CD4-positive, alpha-beta memory T cell (primary cell): ENCODE measurements at regions of chr1 and their contacts with region 1.

Region 1: GRCh38 chr1:247078261-247079140 is at the start of gene ZNF670:
- DNase-seq: peak; percentile 70 to 86 (median 72)
- H3K4me3 ChIP-seq: peak within 1 kb of the TSS; percentile 67 to 73
- H3K4me3 Mint-ChIP-seq: peak within 1 kb of the TSS; percentile 89 to 94 (median 92)
- H3K27ac ChIP-seq: peak within 1 kb of the TSS; percentile 64
- H3K27ac Mint-ChIP-seq: peak within 1 kb of the TSS; percentile 75 to 91 (median 87)
- H3K4me1 ChIP-seq: peaks cover 16% of the 10 kb centered on the region
- H3K4me1 Mint-ChIP-seq: peaks cover 16 to 38% (median 23%) of the 10 kb centered on the region in 4 donors
- H3K27me3 ChIP-seq: no peaks in the 10 kb centered on the region
- H3K27me3 Mint-ChIP-seq: peaks cover 3 to 4% of the 10 kb centered on the region in 2 donors
- total RNA-seq, gene ZNF670: 2.9 to 3.3 TPM

Region 2: GRCh38 chr1:246907472-246907871 is 171.0 kb before region 1 on chr1:
- CTCF ChIA-PET with region 1: no interaction called
- POLR2A ChIA-PET with region 1: no interaction called
- intact Hi-C with region 1: loop called (anchors 10 kb)
- DNase-seq: peak in 4 of 5 donors; percentile 15 to 28 (median 22)
- H3K4me3 ChIP-seq: no peak overlapping the region
- H3K4me3 Mint-ChIP-seq: no peak overlapping the region
- H3K27ac ChIP-seq: no peak overlapping the region
- H3K27ac Mint-ChIP-seq: peak overlapping the region in 2 of 7 donors; percentile 46 to 85
- H3K4me1 ChIP-seq: no peaks in the 10 kb centered on the region
- H3K4me1 Mint-ChIP-seq: peaks cover 0 to 14% (median 4%) of the 10 kb centered on the region in 4 donors
- H3K27me3 ChIP-seq: no peaks in the 10 kb centered on the region
- H3K27me3 Mint-ChIP-seq: no peaks in the 10 kb centered on the region

Region 3: DNA sequence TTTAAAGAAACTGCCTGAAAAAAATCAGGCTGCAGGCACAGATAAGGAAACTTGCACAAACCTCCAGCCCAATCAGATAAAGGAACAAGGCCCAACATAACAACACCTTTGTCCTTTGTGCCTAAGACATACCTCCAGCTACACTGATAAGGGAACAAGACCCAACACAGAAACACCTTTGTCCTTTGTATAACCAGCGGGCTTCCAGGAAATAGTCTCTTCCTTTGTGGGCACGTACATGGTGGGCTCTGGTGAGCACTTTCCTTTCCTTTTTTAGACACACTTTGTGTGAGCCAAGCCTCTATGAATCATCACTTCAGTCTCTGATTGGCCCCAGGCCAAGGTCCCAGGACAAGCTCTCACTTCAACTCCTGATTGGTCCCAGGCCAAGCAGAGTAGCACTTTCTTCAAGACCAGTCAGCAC is 23.5 kb before region 1 on chr1:
- CTCF ChIA-PET with region 1: no interaction called
- POLR2A ChIA-PET with region 1: no interaction called
- intact Hi-C with region 1: no loop called
- DNase-seq: no peak
- H3K4me3 ChIP-seq: no peak overlapping the region
- H3K4me3 Mint-ChIP-seq: no peak overlapping the region
- H3K27ac ChIP-seq: no peak overlapping the region
- H3K27ac Mint-ChIP-seq: no peak overlapping the region
- H3K4me1 ChIP-seq: no peaks in the 10 kb centered on the region
- H3K4me1 Mint-ChIP-seq: peaks cover 1 to 12% (median 4%) of the 10 kb centered on the region in 4 donors
- H3K27me3 ChIP-seq: no peaks in the 10 kb centered on the region
- H3K27me3 Mint-ChIP-seq: no peaks in the 10 kb centered on the region

Region 4: DNA sequence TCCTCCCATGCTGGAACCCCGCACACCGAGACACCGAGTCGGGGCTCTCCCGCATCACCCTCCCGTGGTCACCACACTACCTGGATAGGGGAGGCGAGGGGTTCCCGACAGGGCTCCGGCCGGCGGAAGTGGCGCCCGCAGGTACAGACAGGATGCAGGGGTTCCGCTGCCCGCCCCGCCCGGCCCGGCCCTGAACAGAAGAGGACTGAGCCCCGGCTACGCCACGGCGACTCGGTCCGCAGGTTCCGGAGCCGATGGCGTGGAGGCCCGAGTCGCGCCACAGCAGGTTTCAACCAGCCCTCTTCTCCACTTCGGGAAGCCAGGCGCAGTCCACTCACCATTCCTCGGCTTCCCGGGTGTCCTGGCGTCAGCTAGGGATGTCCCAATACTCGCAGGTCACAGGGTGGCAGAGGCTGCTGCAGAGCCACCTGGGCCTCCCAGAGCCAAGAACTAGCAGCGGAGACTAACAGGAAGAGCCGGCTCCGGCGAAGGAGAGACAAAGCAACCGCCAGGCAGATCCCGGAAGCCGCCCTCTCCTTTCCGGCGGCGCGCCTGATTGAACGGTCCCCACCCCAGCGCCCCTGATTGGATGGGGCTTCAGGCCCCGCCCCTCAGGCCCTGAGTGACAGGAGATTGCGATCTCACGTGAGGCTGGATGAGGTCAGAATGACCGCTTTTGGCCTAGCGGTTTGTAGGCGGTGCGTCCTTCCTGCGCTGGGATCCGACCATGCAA is 25.5 kb after region 1 on chr1 and contains the start of gene ZNF669:
- CTCF ChIA-PET with region 1: no interaction called
- POLR2A ChIA-PET with region 1: interaction called, 18 read pairs
- intact Hi-C with region 1: loop called (anchors 1 kb)
- DNase-seq: peak; percentile 87 to 92 (median 89)
- H3K4me3 ChIP-seq: peak within 1 kb of the TSS; percentile 59 to 87
- H3K4me3 Mint-ChIP-seq: peak within 1 kb of the TSS; percentile 88 to 93 (median 90)
- H3K27ac ChIP-seq: peak within 1 kb of the TSS; percentile 49
- H3K27ac Mint-ChIP-seq: peak within 1 kb of the TSS; percentile 75 to 90 (median 83)
- H3K4me1 ChIP-seq: peaks cover 13% of the 10 kb centered on the region
- H3K4me1 Mint-ChIP-seq: peaks cover 9 to 25% (median 17%) of the 10 kb centered on the region in 4 donors
- H3K27me3 ChIP-seq: no peaks in the 10 kb centered on the region
- H3K27me3 Mint-ChIP-seq: peaks cover 18 to 19% of the 10 kb centered on the region in 2 donors
- total RNA-seq, gene ZNF669: 12.0 to 14.7 TPM

Region 5: GRCh38 chr1:247210376-247211117 is 132.0 kb after region 1 on chr1:
- CTCF ChIA-PET with region 1: no interaction called
- POLR2A ChIA-PET with region 1: interaction called, 10 read pairs
- intact Hi-C with region 1: loop called (anchors 1 kb)
- DNase-seq: peak; percentile 91 to 93 (median 92)
- H3K4me3 ChIP-seq: peak overlapping the region; percentile 66 to 70
- H3K4me3 Mint-ChIP-seq: peak overlapping the region; percentile 94 to 97 (median 95)
- H3K27ac ChIP-seq: peak overlapping the region; percentile 76
- H3K27ac Mint-ChIP-seq: peak overlapping the region; percentile 95 to 97 (median 95)
- H3K4me1 ChIP-seq: peaks cover 70% of the 10 kb centered on the region
- H3K4me1 Mint-ChIP-seq: peaks cover 50 to 74% (median 64%) of the 10 kb centered on the region in 4 donors
- H3K27me3 ChIP-seq: no peaks in the 10 kb centered on the region
- H3K27me3 Mint-ChIP-seq: no peaks in the 10 kb centered on the region

Region 6: DNA sequence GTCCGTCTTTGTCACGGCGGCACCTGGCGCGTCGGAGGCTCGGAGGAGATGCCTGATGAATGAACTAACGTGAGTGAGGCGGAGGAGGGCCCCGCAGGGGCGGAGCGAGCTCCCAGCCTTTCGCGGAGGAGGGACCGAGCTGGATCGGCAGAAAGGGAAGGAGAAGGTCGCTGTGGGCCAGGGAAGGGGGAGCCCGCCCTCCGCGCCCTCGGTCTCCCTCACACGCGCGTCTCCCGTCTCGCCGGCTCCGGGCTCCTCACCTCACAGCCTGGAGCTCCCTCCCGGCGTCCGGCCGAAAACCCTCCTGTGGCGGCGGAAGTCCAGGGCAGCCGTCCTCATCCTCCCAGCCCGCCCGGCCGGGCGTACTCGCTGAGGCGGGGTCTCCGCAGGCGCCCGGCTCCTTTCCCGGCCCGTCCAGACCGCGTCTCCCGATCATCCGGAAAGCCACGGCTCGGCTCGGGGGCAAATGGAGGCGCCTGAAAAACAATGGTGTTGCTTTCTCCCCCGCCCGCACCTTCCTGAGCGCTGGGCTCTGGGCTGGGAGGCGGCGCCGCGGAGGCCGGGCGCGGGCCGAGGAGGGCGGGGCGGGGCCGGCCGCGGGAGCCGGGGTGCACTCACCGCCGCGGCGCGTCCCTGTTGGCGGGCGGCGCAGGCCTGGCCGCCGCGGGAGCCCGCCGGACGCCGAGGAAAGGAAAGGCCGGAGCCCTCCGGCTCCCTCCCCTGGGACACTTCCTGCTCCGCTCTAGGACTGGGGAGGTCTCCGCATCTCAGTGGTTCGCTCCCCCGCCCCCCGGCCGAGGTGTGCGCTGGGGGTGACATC is 252.9 kb after region 1 on chr1 and contains the start of gene ZNF496:
- CTCF ChIA-PET with region 1: no interaction called
- POLR2A ChIA-PET with region 1: no interaction called
- intact Hi-C with region 1: loop called (anchors 2 kb)
- DNase-seq: peak; percentile 52 to 68 (median 59)
- H3K4me3 ChIP-seq: peak within 1 kb of the TSS; percentile 28 to 69
- H3K4me3 Mint-ChIP-seq: peak within 1 kb of the TSS; percentile 92 to 98 (median 93)
- H3K27ac ChIP-seq: peak within 1 kb of the TSS; percentile 31
- H3K27ac Mint-ChIP-seq: peak within 1 kb of the TSS; percentile 29 to 93 (median 64)
- H3K4me1 ChIP-seq: peaks cover 16% of the 10 kb centered on the region
- H3K4me1 Mint-ChIP-seq: peaks cover 1 to 19% (median 13%) of the 10 kb centered on the region in 4 donors
- H3K27me3 ChIP-seq: no peaks in the 10 kb centered on the region
- H3K27me3 Mint-ChIP-seq: no peaks in the 10 kb centered on the region
- total RNA-seq, gene ZNF496: 11.3 to 12.4 TPM